A673 (cell line): ENCODE measurements at regions of chr2 and their contacts with region 1.

Region 1: DNA sequence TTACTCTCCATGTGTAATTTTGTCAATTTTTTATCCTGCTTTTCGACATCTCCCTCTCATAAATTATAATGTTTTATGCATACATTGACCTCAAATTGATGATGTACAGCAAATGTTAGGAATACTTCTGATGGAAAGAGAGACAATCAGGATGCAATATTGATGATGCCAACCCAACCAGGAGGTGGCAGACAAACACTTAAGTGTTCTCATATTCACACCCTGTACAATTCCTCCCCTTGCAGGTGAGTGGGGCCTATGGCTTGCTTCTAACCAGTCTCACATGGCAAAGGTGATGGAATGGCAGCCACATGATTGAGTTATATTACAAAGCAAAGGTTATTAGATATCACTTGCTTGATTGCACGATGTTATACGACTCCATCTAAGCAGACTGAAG is 594.3 kb upstream of the REG3G start:
- DNase-seq: peak; percentile 52
- H3K4me3 ChIP-seq: no peak overlapping the region
- H3K27ac ChIP-seq: no peak overlapping the region
- H3K4me1 ChIP-seq: peaks cover 8% of the 10 kb centered on the region
- H3K27me3 ChIP-seq: no peaks in the 10 kb centered on the region
- CTCF ChIP-seq: peak; percentile 57

Region 2: DNA sequence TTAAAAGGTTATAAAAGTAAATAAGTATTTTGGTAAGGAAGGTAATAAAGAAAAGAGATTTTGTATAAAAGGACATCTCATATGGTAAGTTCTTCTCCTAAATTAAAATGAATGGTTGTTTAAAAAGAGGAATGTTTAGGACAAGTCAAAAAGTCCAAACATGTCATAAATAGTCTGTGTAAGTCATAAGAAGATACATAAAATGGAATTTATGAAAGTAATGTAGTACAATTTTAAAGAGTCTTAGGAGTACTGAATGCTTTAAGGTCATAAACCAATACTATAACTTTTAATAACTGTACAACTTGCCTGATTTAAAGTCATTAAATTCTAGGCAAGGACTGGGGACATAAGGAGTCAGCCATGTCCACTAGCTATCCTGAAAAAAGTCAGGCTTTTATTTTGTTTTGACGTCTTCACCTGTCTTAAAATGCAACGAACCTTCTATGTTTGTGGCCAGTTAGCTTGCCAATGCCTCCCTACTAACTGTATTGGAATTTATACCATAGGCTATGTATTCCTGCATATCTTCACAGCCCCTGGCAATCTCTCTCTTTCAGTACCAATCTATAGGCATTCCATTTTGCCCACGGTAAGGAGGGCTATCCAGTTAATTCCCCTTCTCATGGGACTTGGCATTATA is 596.8 kb before region 1 on chr2:
- CTCF ChIA-PET with region 1: no interaction called
- POLR2A ChIA-PET with region 1: no interaction called
- intact Hi-C with region 1: no loop called
- DNase-seq: no peak
- H3K4me3 ChIP-seq: no peak overlapping the region
- H3K27ac ChIP-seq: no peak overlapping the region
- H3K4me1 ChIP-seq: no peaks in the 10 kb centered on the region
- H3K27me3 ChIP-seq: no peaks in the 10 kb centered on the region
- CTCF ChIP-seq: no peak

Region 3: GRCh38 chr2:78023356-78023755 is 407.9 kb before region 1 on chr2:
- CTCF ChIA-PET with region 1: no interaction called
- POLR2A ChIA-PET with region 1: no interaction called
- intact Hi-C with region 1: no loop called
- DNase-seq: no peak
- H3K4me3 ChIP-seq: no peak overlapping the region
- H3K27ac ChIP-seq: no peak overlapping the region
- H3K4me1 ChIP-seq: no peaks in the 10 kb centered on the region
- H3K27me3 ChIP-seq: no peaks in the 10 kb centered on the region
- CTCF ChIP-seq: no peak

Region 4: GRCh38 chr2:78486565-78486964 is 55.3 kb after region 1 on chr2:
- CTCF ChIA-PET with region 1: no interaction called
- POLR2A ChIA-PET with region 1: no interaction called
- intact Hi-C with region 1: no loop called
- DNase-seq: peak; percentile 5
- H3K4me3 ChIP-seq: peak overlapping the region; percentile 27
- H3K27ac ChIP-seq: no peak overlapping the region
- H3K4me1 ChIP-seq: no peaks in the 10 kb centered on the region
- H3K27me3 ChIP-seq: no peaks in the 10 kb centered on the region
- CTCF ChIP-seq: no peak

Region 5: GRCh38 chr2:78707776-78708386 is 276.6 kb after region 1 on chr2:
- CTCF ChIA-PET with region 1: interaction called, 4 read pairs
- POLR2A ChIA-PET with region 1: no interaction called
- intact Hi-C with region 1: loop called (anchors 2 kb)
- DNase-seq: peak; percentile 83
- H3K4me3 ChIP-seq: no peak overlapping the region
- H3K27ac ChIP-seq: peak overlapping the region; percentile 88
- H3K4me1 ChIP-seq: no peaks in the 10 kb centered on the region
- H3K27me3 ChIP-seq: no peaks in the 10 kb centered on the region
- CTCF ChIP-seq: no peak

Region 6: DNA sequence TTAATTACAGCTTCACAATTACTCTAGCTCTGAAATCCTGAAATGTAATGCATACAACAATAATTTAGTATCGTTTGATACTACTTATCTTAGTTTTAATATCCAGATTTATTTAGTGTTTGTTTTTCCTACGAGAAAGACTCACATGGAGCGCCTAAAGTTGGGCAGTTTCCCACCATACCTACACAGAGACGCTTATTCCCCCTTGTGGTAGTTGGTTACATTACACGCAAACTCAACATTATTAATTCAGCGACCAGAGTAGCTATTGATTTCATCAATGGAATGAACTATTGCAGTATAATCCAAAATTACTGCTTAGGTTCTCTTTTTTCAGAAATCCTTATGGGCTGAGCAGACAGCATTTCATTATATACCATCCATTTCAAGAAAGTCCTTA is 430.3 kb after region 1 on chr2:
- CTCF ChIA-PET with region 1: no interaction called
- POLR2A ChIA-PET with region 1: no interaction called
- intact Hi-C with region 1: loop called (anchors 2 kb)
- DNase-seq: peak; percentile 68
- H3K4me3 ChIP-seq: no peak overlapping the region
- H3K27ac ChIP-seq: no peak overlapping the region
- H3K4me1 ChIP-seq: no peaks in the 10 kb centered on the region
- H3K27me3 ChIP-seq: no peaks in the 10 kb centered on the region
- CTCF ChIP-seq: peak; percentile 62

Region 7: GRCh38 chr2:79530443-79530842 is 1099.2 kb after region 1 on chr2:
- CTCF ChIA-PET with region 1: no interaction called
- POLR2A ChIA-PET with region 1: no interaction called
- intact Hi-C with region 1: loop called (anchors 10 kb)
- DNase-seq: peak; percentile 5
- H3K4me3 ChIP-seq: no peak overlapping the region
- H3K27ac ChIP-seq: no peak overlapping the region
- H3K4me1 ChIP-seq: no peaks in the 10 kb centered on the region
- H3K27me3 ChIP-seq: no peaks in the 10 kb centered on the region
- CTCF ChIP-seq: 0 out of 2 replicates have a peak, but pooled peaks have one; percentile 22